ENCODE measurements at regions of chr12 and their contacts with region 1.

Region 1: GRCh38 chr12:89352492-89353187 is at the start of gene DUSP6:
- DNase-seq: peak; percentile 96 to 97 (median 96)
- ATAC-seq: peak; percentile 76 to 88 (median 84)
- H3K4me3 ChIP-seq: peak within 1 kb of the TSS; percentile 76 to 95 (median 86)
- H3K27ac ChIP-seq: peak within 1 kb of the TSS; percentile 96 to 100 (median 99)
- H3K4me1 ChIP-seq: peaks cover 0 to 52% (median 30%) of the 10 kb centered on the region in 12 donors
- H3K27me3 ChIP-seq: no peaks in the 10 kb centered on the region
- CTCF ChIP-seq: no peak
- POLR2A ChIP-seq: peak in 1 of 2 donors; percentile 58
- total RNA-seq, gene DUSP6: 11.4 to 66.7 (median 24.5) TPM

Region 2: DNA sequence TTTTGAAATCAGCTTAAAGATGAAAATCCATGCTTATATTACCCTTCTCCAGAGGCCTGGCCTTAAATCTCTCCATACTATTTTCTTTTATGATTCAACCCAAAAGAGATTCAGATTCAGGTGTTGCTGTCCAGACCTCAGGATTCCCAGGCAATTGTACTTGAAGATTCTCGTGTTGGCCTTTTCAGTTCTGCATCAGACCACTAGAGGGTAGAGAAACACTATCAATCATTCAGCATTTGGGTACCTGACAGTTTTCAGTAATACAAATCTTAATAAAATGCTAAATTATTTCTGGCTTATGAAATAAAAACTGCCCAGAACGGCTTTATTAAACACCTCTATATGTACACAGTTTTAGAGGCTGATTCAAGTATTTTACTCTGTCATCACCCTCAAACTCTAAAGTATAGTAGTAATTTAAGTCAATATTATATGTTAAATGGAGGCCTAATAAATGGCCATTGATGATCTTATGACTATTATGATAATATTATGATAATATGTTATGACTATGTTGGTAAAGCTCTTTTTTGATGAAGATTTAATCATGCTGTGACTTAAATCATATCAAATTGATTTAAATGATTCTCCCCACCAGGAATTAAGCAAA is 301.5 kb before region 1 on chr12:
- intact Hi-C with region 1: loop called in 9 of 10 experiments (anchors 2 to 10 kb)
- DNase-seq: peak in 2 of 5 donors; percentile 15 to 22
- ATAC-seq: peak in 3 of 4 donors; percentile 68 to 76 (median 70)
- H3K4me3 ChIP-seq: no peak overlapping the region
- H3K27ac ChIP-seq: no peak overlapping the region
- H3K4me1 ChIP-seq: peaks cover 0 to 12% (median 0%) of the 10 kb centered on the region in 12 donors
- H3K27me3 ChIP-seq: no peaks in the 10 kb centered on the region
- CTCF ChIP-seq: peak; percentile 86 to 97 (median 94)
- POLR2A ChIP-seq: no peak

Region 3: DNA sequence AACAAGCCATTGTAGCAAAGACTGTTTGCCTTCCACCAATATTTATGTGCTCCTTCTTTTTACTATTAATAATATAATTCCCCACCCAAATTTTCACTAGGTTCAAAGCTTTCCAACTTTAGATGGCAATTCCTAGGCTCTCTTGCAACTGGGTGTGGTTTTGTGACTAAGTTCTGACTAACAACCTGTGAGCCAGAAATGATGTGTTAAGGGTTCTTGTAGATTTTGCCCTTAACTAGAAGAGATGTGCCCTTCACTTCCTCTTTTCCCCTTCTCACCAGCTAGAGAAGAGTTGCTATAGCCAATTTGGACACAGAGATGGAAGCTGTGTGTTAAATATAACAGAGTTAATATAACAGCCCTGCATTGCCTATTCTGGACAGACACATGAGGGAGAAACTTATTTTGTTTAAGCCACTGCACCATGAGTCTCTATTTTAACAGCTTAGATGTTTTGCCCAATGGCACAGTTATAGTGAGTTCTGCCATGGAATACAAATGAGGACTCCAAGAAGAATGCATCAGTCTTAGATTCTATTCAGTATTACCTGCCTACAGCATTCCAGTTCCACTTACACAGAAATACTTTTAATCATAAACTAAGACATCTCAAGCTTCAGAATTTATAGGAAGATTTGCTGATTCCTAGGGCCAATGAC is 216.5 kb before region 1 on chr12:
- intact Hi-C with region 1: loop called in 2 of 10 experiments (anchors 10 kb)
- DNase-seq: no peak
- ATAC-seq: no peak
- H3K4me3 ChIP-seq: no peak overlapping the region
- H3K27ac ChIP-seq: peak overlapping the region in 1 of 12 donors; percentile 10
- H3K4me1 ChIP-seq: peaks cover 0 to 24% (median 10%) of the 10 kb centered on the region in 12 donors
- H3K27me3 ChIP-seq: no peaks in the 10 kb centered on the region
- CTCF ChIP-seq: no peak
- POLR2A ChIP-seq: no peak

Region 4: GRCh38 chr12:89162704-89163261 is 189.9 kb before region 1 on chr12:
- intact Hi-C with region 1: loop called in 5 of 10 experiments (anchors 5 to 10 kb)
- DNase-seq: peak; percentile 42 to 73 (median 53)
- ATAC-seq: peak; percentile 51 to 91 (median 87)
- H3K4me3 ChIP-seq: no peak overlapping the region
- H3K27ac ChIP-seq: peak overlapping the region; percentile 1 to 90 (median 64)
- H3K4me1 ChIP-seq: peaks cover 0 to 88% (median 22%) of the 10 kb centered on the region in 12 donors
- H3K27me3 ChIP-seq: no peaks in the 10 kb centered on the region
- CTCF ChIP-seq: no peak
- POLR2A ChIP-seq: no peak

Region 5: DNA sequence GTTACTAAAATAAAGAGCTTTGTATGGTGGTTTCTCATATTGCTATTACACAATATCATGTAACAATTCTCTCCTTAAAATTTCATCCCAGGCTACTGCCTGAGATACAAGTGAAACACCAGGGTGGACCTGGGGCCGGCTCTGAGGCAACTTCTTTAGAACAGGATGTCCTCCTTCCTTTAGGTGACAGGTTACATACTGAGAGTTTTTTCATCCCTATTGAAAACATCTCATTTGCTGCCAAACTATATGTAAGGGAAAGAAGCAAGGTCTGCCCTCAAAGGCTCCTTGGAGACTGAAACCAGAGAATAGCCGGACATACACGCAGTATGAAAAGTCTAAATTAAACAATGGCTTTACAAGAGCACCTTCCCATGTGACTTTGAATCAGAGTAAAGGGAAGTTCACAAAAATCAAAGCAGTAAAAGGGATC is 140.3 kb before region 1 on chr12:
- intact Hi-C with region 1: loop called in 5 of 10 experiments (anchors 2 to 10 kb)
- DNase-seq: peak in 4 of 5 donors; percentile 38 to 54 (median 48)
- ATAC-seq: peak; percentile 83 to 97 (median 86)
- H3K4me3 ChIP-seq: no peak overlapping the region
- H3K27ac ChIP-seq: peak overlapping the region; percentile 35 to 76 (median 60)
- H3K4me1 ChIP-seq: peaks cover 0 to 43% (median 9%) of the 10 kb centered on the region in 12 donors
- H3K27me3 ChIP-seq: no peaks in the 10 kb centered on the region
- CTCF ChIP-seq: no peak
- POLR2A ChIP-seq: no peak

Region 6: GRCh38 chr12:89389755-89390661 is 37.4 kb after region 1 on chr12:
- intact Hi-C with region 1: loop called in 4 of 10 experiments (anchors 2 to 5 kb)
- DNase-seq: no peak
- ATAC-seq: peak; percentile 82 to 87 (median 85)
- H3K4me3 ChIP-seq: no peak overlapping the region
- H3K27ac ChIP-seq: peak overlapping the region; percentile 32 to 80 (median 68)
- H3K4me1 ChIP-seq: peaks cover 0 to 64% (median 30%) of the 10 kb centered on the region in 12 donors
- H3K27me3 ChIP-seq: no peaks in the 10 kb centered on the region
- CTCF ChIP-seq: no peak
- POLR2A ChIP-seq: no peak

Region 7: GRCh38 chr12:89401433-89402058 is 48.9 kb after region 1 on chr12:
- intact Hi-C with region 1: no loop called
- DNase-seq: no peak
- ATAC-seq: no peak
- H3K4me3 ChIP-seq: no peak overlapping the region
- H3K27ac ChIP-seq: no peak overlapping the region
- H3K4me1 ChIP-seq: peaks cover 0 to 15% (median 0%) of the 10 kb centered on the region in 12 donors
- H3K27me3 ChIP-seq: no peaks in the 10 kb centered on the region
- CTCF ChIP-seq: no peak
- POLR2A ChIP-seq: no peak

Region 8: DNA sequence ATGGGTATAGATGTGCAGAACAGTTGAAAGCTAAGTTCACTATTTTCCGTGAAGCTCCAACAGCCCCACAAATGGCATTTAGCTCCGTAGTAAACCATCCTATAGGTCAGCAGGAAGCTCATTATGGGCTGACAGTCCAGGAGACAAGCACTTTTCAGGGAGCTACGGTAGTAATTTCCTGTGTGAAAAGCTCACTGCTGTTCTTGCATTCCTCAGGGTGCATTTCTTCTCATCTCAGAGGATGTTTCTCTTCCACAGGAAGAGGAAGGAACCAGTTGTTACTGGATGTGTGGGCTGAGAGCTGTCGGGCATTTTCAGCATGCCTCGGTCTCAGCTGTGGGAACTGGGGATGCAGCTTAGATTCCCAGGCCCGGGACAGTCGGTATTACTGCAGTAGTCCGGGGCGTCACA is 99.2 kb after region 1 on chr12:
- intact Hi-C with region 1: loop called (anchors 2 to 5 kb)
- DNase-seq: peak in 4 of 5 donors; percentile 30 to 57 (median 50)
- ATAC-seq: peak; percentile 60 to 78 (median 70)
- H3K4me3 ChIP-seq: peak overlapping the region in 2 of 12 donors; percentile 8 to 14
- H3K27ac ChIP-seq: peak overlapping the region in 10 of 12 donors; percentile 23 to 85 (median 68)
- H3K4me1 ChIP-seq: peaks cover 0 to 45% (median 35%) of the 10 kb centered on the region in 12 donors
- H3K27me3 ChIP-seq: no peaks in the 10 kb centered on the region
- CTCF ChIP-seq: no peak
- POLR2A ChIP-seq: no peak

Measured in heart left ventricle (tissue), 16 donors.